ENCODE measurements at regions of chr2 and their contacts with region 1.

Region 1: GRCh38 chr2:149017116-149017985 is 21.1 kb upstream of the LYPD6B start:
- DNase-seq: peak; percentile 83
- H3K4me3 ChIP-seq: no peak overlapping the region
- H3K27ac ChIP-seq: no peak overlapping the region
- H3K4me1 ChIP-seq: peaks cover 0 to 20% (median 5%) of the 10 kb centered on the region in 4 donors
- H3K27me3 ChIP-seq: no peaks in the 10 kb centered on the region
- CTCF ChIP-seq: peak; percentile 80 to 89 (median 85)
- EP300 ChIP-seq: no peak
- POLR2A ChIP-seq: no peak

Region 2: GRCh38 chr2:149388120-149388798 is 370.9 kb after region 1 on chr2:
- in situ Hi-C with region 1: no loop called
- intact Hi-C with region 1: no loop called
- DNase-seq: no peak
- H3K4me3 ChIP-seq: no peak overlapping the region
- H3K27ac ChIP-seq: no peak overlapping the region
- H3K4me1 ChIP-seq: no peaks in the 10 kb centered on the region
- H3K27me3 ChIP-seq: no peaks in the 10 kb centered on the region
- CTCF ChIP-seq: no peak
- EP300 ChIP-seq: no peak
- POLR2A ChIP-seq: no peak

Region 3: DNA sequence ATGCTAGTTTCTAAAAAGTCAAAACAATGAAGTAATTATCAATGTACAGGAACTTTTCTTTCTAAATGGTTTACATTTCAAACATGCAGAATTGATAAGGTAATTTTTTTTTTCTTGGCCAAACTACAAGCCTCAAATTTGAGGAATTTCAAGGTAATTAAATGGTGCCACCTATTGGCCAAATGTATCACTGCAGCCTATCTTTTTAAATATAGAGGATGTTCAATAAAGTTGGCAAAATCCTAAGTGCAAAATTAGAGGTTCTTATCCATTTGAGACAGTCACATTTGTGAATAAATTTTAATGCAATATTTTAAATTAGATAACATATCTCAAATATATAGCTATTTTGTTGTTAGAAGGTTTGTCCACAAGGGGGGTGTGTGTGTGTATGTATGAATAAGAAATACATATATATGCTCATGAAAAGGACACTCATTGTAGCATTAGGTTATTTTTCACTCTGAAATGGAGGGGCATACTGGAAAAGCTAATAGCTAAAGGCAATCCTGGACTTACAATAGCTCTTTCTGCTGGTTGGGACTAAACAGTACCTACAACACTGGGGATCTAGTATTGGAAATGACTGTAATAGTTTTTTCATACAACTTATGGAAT is 544.1 kb after region 1 on chr2:
- in situ Hi-C with region 1: loop called (anchors 5 to 10 kb)
- intact Hi-C with region 1: no loop called
- DNase-seq: no peak
- H3K4me3 ChIP-seq: no peak overlapping the region
- H3K27ac ChIP-seq: no peak overlapping the region
- H3K4me1 ChIP-seq: peaks cover 0 to 14% (median 7%) of the 10 kb centered on the region in 4 donors
- H3K27me3 ChIP-seq: no peaks in the 10 kb centered on the region
- CTCF ChIP-seq: peak; percentile 88 to 94 (median 92)
- EP300 ChIP-seq: no peak
- POLR2A ChIP-seq: no peak

Region 4: GRCh38 chr2:149894760-149895159 is 877.4 kb after region 1 on chr2:
- in situ Hi-C with region 1: no loop called
- intact Hi-C with region 1: no loop called
- DNase-seq: no peak
- H3K4me3 ChIP-seq: no peak overlapping the region
- H3K27ac ChIP-seq: no peak overlapping the region
- H3K4me1 ChIP-seq: no peaks in the 10 kb centered on the region
- H3K27me3 ChIP-seq: no peaks in the 10 kb centered on the region
- CTCF ChIP-seq: no peak
- EP300 ChIP-seq: no peak
- POLR2A ChIP-seq: no peak